Posterior cingulate gyrus (tissue), 11 donors: ENCODE measurements at regions of chr19 and their contacts with region 1.

Region 1: GRCh38 chr19:10388957-10389356 is 8.6 kb upstream of the TYK2 start:
- DNase-seq: peak; percentile 70 to 97 (median 92)

Region 2: DNA sequence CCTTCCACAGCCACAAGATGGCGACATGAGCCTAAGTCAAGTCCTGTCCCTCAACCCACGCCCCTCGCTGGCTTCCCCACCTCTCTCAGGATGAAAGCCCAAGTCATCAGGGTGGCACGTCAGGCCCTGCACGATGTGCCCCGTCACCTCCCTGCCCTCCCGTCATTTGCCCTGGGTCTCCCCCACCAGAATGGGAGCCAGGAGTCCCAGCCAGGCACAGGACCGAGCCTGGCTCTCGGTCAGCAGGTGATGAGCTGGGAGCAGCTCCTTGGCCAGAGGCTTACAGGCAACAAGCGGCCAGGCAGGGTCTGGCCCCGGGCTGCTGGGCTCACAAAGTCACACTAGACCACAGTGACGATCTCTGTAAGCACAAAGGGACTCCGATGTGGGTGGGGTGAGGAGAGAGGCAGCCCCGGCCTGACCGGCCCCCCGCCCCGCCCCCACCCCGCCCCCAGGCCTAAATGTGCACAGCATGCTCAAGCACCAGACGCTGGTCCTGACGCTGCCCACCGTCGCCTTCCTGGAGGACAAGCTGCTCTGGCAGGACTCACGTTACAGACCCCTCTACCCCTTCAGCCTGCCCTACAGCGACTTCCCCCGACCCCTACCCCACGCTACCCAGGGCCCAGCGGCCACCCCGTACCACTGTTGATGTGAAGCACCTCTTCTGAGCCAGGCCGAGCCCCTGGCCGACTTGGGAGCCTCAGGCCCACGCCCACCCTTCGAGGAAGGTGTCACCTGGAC is 129.6 kb before region 1 on chr19:
- intact Hi-C with region 1: loop called (anchors 2 kb)
- DNase-seq: peak; percentile 53 to 95 (median 80)

Region 3: DNA sequence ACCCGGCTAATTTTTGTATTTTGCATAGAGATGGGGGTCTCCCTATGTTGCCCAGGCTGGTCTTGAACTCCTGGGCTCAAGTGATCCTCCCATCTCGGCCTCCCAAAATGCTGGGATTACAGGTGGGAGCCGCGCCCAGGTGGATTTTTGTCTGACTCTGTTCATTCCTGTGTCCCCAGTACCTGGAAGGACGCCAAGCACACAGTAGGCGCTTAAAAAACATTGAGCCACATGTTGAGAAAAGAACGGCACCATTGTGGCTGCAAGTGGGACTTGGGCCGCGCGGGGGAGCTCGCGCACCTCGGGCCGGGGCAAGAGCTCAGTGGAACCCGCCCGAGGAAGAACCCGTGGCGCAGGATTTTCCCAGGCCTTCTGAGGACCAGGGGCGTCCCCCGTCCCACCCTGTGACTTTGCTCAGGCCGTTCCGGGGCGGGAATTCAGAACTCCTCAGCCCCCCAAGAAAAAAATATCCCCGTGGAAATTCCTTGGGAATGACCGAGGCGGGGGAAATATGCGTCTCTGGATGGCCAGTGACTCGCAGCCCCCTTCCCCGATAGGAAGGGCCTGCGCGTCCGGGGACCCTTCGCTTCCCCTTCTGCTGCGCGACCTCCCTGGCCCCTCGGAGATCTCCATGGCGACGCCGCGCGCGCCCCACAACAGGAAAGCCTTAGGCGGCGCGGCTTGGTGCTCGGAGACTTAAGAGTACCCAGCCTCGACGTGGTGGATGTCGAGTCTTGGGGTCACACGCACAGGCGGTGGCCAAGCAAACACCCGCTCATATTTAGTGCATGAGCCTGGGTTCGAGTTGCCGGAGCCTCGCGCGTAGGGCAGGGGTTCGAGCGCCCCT is 119.4 kb before region 1 on chr19:
- intact Hi-C with region 1: loop called (anchors 1 kb)
- DNase-seq: peak; percentile 61 to 97 (median 82)